ENCODE measurements at regions of chr5 and their contacts with region 1.

Region 1: DNA sequence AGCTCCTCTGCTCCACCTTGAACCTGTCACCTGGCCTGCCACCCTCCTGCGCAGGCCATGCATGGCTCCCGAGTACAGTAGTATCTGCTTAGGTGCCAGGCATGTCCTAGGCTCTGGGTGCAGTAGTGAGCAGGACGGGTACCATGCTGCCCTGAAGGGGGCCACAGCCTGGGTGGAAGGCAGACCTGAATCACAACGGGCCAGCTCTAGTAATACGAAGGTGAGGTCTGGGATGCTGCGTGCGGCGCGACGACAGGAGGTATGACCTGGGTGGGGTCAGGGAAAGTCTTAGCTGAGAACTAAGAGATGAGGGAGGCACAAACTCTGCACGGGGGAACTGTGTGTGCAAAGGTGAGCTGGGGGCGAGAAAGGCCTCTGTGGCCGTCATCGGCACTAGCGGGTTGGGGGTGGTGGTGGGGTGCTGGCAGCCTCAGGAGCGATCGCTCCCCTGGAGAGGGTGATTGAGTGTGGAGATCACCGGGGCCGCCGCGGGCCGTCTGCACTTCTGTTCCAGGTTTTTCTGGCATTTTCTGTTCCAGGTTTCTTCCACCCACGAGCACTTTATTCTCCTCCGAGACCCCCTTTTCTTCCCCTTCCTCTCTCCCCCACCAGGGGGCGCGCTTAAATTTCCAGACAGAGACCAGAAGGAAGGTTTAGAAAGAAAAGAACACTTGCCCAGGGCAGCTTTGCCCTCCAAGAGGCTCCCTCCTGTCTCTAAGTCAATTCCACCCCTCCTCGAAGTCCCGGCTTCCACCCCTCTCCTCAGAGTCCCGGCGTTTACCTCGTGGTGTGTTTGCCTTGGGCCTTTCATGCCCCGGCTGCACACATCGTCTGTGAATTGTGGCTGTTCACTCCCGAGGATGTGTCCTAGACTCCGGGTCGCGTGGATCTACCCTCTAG is 15.1 kb downstream of the PDLIM4 start:
- DNase-seq: peak in 3 of 5 donors; percentile 49 to 76 (median 52)
- ATAC-seq: peak in 3 of 4 donors; percentile 14 to 53 (median 45)
- H3K4me3 ChIP-seq: peak overlapping the region in 3 of 12 donors; percentile 2 to 42 (median 29)
- H3K27ac ChIP-seq: peak overlapping the region in 1 of 12 donors; percentile 53
- H3K4me1 ChIP-seq: peaks cover 0 to 13% (median 0%) of the 10 kb centered on the region in 12 donors
- H3K27me3 ChIP-seq: no peaks in the 10 kb centered on the region
- CTCF ChIP-seq: peak; percentile 79 to 93 (median 86)
- POLR2A ChIP-seq: no peak

Region 2: GRCh38 chr5:131883984-131884383 is 388.6 kb before region 1 on chr5:
- intact Hi-C with region 1: no loop called
- DNase-seq: no peak
- ATAC-seq: no peak
- H3K4me3 ChIP-seq: no peak overlapping the region
- H3K27ac ChIP-seq: no peak overlapping the region
- H3K4me1 ChIP-seq: no peaks in the 10 kb centered on the region
- H3K27me3 ChIP-seq: no peaks in the 10 kb centered on the region
- CTCF ChIP-seq: no peak
- POLR2A ChIP-seq: no peak

Region 3: GRCh38 chr5:131996207-131997025 is 276.1 kb before region 1 on chr5:
- intact Hi-C with region 1: no loop called
- DNase-seq: peak in 1 of 5 donors; percentile 0
- ATAC-seq: no peak
- H3K4me3 ChIP-seq: no peak overlapping the region
- H3K27ac ChIP-seq: no peak overlapping the region
- H3K4me1 ChIP-seq: peaks cover 0 to 4% (median 0%) of the 10 kb centered on the region in 12 donors
- H3K27me3 ChIP-seq: no peaks in the 10 kb centered on the region
- CTCF ChIP-seq: no peak
- POLR2A ChIP-seq: no peak

Region 4: DNA sequence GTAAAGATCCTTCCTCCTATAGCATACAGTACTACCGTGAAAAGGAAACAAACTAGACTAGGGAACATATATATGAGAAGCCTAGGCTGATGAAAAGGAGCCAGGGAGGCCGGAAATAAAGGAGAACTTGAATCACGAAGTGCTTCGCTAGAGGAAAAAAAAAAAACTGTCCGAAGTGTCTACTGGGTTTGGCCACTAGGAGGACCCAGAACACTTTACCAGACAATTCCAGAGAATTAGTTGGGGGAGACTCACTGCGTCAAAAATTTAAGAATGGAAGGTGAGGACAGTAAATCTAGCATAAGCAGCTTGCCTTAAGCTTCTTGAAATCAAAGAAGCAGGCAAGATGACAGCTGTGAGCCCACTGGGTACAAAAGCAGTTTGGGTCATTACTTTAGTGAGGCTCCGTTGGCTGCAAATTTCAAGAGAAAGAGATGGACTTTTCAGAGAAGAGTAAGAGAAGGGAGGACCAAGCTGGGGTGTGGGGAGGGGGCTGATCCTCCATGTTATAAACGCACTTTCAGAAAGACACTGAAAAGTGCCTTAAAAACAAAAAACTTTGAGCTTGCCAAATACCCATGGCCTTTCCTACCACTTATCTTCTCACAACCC is 92.3 kb before region 1 on chr5:
- intact Hi-C with region 1: loop called in 2 of 10 experiments (anchors 5 to 10 kb)
- DNase-seq: no peak
- ATAC-seq: peak in 2 of 4 donors; percentile 58 to 64
- H3K4me3 ChIP-seq: no peak overlapping the region
- H3K27ac ChIP-seq: no peak overlapping the region
- H3K4me1 ChIP-seq: peaks cover 0 to 18% (median 3%) of the 10 kb centered on the region in 12 donors
- H3K27me3 ChIP-seq: no peaks in the 10 kb centered on the region
- CTCF ChIP-seq: peak; percentile 53 to 81 (median 71)
- POLR2A ChIP-seq: no peak

Region 5: GRCh38 chr5:132238169-132238744 is 34.3 kb before region 1 on chr5:
- intact Hi-C with region 1: loop called in 2 of 10 experiments (anchors 5 kb)
- DNase-seq: peak; percentile 60 to 73 (median 68)
- ATAC-seq: peak; percentile 57 to 84 (median 76)
- H3K4me3 ChIP-seq: no peak overlapping the region
- H3K27ac ChIP-seq: no peak overlapping the region
- H3K4me1 ChIP-seq: no peaks in the 10 kb centered on the region
- H3K27me3 ChIP-seq: no peaks in the 10 kb centered on the region
- CTCF ChIP-seq: peak; percentile 73 to 90 (median 80)
- POLR2A ChIP-seq: no peak

Region 6: DNA sequence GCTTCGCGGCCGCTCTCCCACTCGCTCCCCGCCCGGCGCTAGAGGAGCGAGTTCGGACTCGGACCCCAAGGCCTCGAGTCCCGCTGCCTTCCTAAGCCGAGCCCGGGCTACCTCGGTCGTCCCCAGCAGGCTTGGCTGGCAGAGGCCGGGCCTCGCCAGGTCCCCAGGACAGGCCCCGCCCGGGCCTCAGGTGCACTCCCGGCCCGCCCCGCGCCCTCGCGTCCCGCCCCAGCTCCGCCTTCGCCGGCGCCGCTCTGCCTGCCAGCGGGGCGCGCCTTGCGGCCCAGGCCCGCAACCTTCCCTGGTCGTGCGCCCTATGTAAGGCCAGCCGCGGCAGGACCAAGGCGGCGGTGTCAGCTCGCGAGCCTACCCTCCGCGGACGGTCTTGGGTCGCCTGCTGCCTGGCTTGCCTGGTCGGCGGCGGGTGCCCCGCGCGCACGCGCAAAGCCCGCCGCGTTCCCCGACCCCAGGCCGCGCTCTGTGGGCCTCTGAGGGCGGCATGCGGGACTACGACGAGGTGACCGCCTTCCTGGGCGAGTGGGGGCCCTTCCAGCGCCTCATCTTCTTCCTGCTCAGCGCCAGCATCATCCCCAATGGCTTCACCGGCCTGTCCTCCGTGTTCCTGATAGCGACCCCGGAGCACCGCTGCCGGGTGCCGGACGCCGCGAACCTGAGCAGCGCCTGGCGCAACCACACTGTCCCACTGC is 97.1 kb after region 1 on chr5 and contains the start of gene SLC22A5:
- intact Hi-C with region 1: loop called in 1 of 10 experiments (anchors 5 kb)
- DNase-seq: peak; percentile 56 to 83 (median 75)
- ATAC-seq: peak; percentile 62 to 91 (median 82)
- H3K4me3 ChIP-seq: peak within 1 kb of the TSS; percentile 66 to 90 (median 78)
- H3K27ac ChIP-seq: peak within 1 kb of the TSS; percentile 64 to 94 (median 88)
- H3K4me1 ChIP-seq: peaks cover 0 to 42% (median 22%) of the 10 kb centered on the region in 12 donors
- H3K27me3 ChIP-seq: no peaks in the 10 kb centered on the region
- CTCF ChIP-seq: no peak
- POLR2A ChIP-seq: peak in 1 of 2 donors; percentile 50
- total RNA-seq, gene SLC22A5: 7.5 to 42.5 (median 13.5) TPM

Region 7: DNA sequence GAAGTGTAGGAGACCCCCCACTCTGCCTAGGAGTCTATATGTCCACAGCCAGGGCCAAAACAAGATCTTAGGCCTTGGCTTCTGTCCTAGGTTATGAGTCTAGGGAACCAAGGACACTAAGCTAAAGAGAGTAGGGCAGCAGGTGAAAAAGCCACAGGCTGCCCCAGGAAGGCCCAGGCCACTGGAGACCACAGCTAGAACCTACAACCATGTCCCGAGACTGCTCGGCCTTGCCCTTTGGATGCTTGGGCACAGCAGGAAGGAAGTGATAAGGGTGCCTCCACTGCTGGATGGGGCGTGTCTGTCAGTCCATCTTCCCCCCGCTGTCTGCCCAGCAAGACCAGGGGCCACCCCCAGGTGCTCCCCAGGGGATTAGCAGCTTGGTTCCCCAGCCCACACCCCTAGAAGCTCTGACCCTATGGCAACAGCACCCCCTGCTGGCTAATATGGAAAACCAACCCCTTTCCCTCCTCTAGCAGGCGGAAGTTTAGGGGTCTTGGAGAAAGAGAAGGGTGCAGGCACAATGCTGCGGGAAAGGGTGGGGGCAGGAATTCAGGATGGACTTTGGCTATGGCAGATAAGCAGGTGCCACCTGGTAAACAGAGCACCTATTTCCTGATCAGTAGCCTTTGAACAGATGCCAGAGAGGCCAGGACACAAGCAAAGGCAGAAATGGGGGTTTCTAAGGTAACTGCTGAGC is 228.5 kb after region 1 on chr5:
- intact Hi-C with region 1: loop called in 3 of 10 experiments (anchors 5 to 10 kb)
- DNase-seq: peak; percentile 57 to 77 (median 69)
- ATAC-seq: peak in 3 of 4 donors; percentile 10 to 42 (median 19)
- H3K4me3 ChIP-seq: no peak overlapping the region
- H3K27ac ChIP-seq: peak overlapping the region in 11 of 12 donors; percentile 8 to 96 (median 42)
- H3K4me1 ChIP-seq: peaks cover 0 to 65% (median 29%) of the 10 kb centered on the region in 12 donors
- H3K27me3 ChIP-seq: no peaks in the 10 kb centered on the region
- CTCF ChIP-seq: peak; percentile 70 to 93 (median 83)
- POLR2A ChIP-seq: no peak

Measured in heart left ventricle (tissue), 16 donors.